ENCODE measurements at regions of chr4 and their contacts with region 1.

Region 1: DNA sequence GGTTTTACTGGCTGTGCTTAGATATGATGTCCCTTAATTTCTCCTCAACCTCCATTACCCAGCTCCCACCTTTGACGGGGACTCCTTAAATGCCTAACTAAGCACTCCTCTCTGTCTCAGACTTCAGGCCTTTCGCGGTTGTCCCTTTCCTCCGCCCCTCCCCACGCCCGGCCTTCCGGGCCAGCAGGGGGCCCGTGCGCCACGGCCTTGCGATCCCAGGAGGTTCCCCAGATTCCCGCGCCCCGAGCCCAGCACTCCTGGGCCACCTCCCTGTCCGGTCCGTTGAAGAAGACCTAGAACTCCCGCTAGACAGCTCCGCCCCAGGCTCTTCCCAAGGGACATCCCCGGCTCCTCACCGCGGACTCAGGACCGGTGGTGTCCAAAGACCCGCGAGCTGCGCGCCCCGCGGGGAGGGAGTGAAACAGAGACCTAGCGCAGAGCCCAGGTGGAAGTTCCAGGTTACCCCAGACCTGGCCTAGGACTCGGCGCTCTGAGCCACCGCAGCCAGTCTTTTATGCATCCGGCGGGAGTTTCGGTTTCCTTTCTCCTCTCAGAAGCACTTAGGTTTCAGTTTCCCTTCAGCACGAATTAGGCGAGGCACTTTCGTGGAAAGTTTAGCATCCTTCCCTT is at the start of gene DDX60:
- DNase-seq: peak; percentile 74
- ATAC-seq: peak; percentile 87
- H3K4me3 ChIP-seq: peak within 1 kb of the TSS; percentile 84
- H3K27ac ChIP-seq: peak within 1 kb of the TSS; percentile 75
- H3K4me1 ChIP-seq: peaks cover 23% of the 10 kb centered on the region
- H3K27me3 ChIP-seq: no peaks in the 10 kb centered on the region
- CTCF ChIP-seq: peak; percentile 52
- total RNA-seq, gene DDX60: 3.2 and 6.3 TPM in 2 replicates

Region 2: DNA sequence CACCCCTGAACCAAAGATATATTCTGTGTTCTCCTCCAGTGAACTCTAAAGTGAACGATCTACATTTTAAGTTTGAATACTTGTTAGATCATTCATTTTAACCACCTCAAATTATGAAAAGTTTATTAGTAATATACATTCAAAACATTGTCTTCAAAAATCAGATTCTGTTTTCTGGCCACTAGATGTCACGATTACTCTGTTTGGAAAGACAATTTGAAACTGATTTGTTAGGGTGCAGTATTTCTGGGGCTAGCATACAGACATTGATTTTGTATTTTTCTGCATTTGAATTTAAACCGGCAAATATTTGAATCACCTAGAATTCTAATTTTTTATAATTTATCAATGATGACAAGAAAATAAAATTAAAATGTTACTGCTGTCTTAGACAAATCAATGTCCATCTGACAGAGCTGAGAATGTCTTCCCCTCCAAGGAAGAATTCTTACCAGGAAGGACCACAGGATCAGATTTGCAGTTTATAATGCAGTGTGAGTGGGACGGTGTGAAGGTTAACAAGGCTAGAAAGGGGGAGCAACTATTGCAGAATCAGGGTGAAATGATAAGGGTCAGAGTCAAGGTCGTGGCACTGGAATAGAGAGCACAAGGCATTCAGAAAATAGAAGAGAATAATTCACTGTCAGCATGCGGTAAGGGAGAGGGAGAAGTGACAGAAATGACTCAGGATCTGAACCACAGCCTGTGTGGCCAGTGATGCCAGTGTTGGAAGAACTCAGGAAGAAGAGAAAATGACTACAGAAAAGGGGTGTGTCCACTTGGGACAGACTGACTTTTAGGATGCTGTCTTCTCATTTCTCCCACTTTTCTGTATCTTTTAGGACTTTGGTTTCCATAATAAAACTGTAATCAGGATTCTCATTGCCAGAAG is 134.4 kb before region 1 on chr4:
- CTCF ChIA-PET with region 1: no interaction called
- POLR2A ChIA-PET with region 1: no interaction called
- intact Hi-C with region 1: loop called (anchors 10 kb)
- DNase-seq: peak; percentile 55
- ATAC-seq: peak; percentile 64
- H3K4me3 ChIP-seq: no peak overlapping the region
- H3K27ac ChIP-seq: no peak overlapping the region
- H3K4me1 ChIP-seq: peaks cover 6% of the 10 kb centered on the region
- H3K27me3 ChIP-seq: no peaks in the 10 kb centered on the region
- CTCF ChIP-seq: peak; percentile 78

Region 3: GRCh38 chr4:168480931-168481611 is 162.7 kb after region 1 on chr4:
- CTCF ChIA-PET with region 1: no interaction called
- POLR2A ChIA-PET with region 1: no interaction called
- intact Hi-C with region 1: loop called (anchors 2 kb)
- DNase-seq: peak; percentile 82
- ATAC-seq: peak; percentile 27
- H3K4me3 ChIP-seq: peak overlapping the region; percentile 89
- H3K27ac ChIP-seq: peak overlapping the region; percentile 94
- H3K4me1 ChIP-seq: peaks cover 54% of the 10 kb centered on the region
- H3K27me3 ChIP-seq: no peaks in the 10 kb centered on the region
- CTCF ChIP-seq: no peak

Measured in PC-3 (cell line).